Activated naive CD8-positive, alpha-beta T cell treated with anti-CD3 and anti-CD28 coated beads, Interleukin-2, amount 10 ng/mL, durations not matched to agents 7 days and 5 days (primary cell): ENCODE measurements at regions of chr3 and their contacts with region 1.

Region 1: GRCh38 chr3:13452490-13453335 is 27.4 kb upstream of the HDAC11 start:
- DNase-seq: peak; percentile 47
- ATAC-seq: no peak
- H3K4me3 Mint-ChIP-seq: peak overlapping the region; percentile 79
- H3K27ac Mint-ChIP-seq: peak overlapping the region; percentile 88
- H3K4me1 Mint-ChIP-seq: peaks cover 11% of the 10 kb centered on the region
- H3K27me3 Mint-ChIP-seq: peaks cover 2% of the 10 kb centered on the region

Region 2: GRCh38 chr3:13346481-13347389 is 106.0 kb before region 1 on chr3:
- POLR2A ChIA-PET with region 1: interaction called, 19 read pairs
- DNase-seq: peak; percentile 71
- ATAC-seq: peak; percentile 80
- H3K4me3 Mint-ChIP-seq: peak overlapping the region; percentile 38
- H3K27ac Mint-ChIP-seq: peak overlapping the region; percentile 83
- H3K4me1 Mint-ChIP-seq: peaks cover 60% of the 10 kb centered on the region
- H3K27me3 Mint-ChIP-seq: no peaks in the 10 kb centered on the region

Region 3: DNA sequence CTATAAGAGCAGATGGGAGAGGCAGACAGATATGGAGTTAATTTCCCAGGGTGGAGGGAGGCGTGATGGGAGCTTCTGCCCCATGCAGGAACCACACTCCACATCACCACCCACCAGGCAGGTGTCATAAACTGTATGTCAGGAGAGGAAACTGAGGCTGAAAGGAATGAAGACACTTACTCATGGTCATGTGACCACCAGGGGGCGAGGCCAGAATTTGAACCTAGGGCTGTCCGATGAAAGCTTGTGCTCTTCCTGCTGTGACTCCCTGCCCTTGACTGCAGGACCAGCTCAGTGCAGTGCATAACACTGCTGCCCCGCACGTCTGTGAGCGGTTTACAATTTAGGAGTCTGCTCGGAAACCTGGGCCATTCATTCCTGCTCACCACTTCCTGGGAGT is 61.4 kb before region 1 on chr3:
- POLR2A ChIA-PET with region 1: interaction called, 10 read pairs
- DNase-seq: no peak
- ATAC-seq: peak; percentile 14
- H3K4me3 Mint-ChIP-seq: no peak overlapping the region
- H3K27ac Mint-ChIP-seq: no peak overlapping the region
- H3K4me1 Mint-ChIP-seq: peaks cover 5% of the 10 kb centered on the region
- H3K27me3 Mint-ChIP-seq: no peaks in the 10 kb centered on the region

Region 4: DNA sequence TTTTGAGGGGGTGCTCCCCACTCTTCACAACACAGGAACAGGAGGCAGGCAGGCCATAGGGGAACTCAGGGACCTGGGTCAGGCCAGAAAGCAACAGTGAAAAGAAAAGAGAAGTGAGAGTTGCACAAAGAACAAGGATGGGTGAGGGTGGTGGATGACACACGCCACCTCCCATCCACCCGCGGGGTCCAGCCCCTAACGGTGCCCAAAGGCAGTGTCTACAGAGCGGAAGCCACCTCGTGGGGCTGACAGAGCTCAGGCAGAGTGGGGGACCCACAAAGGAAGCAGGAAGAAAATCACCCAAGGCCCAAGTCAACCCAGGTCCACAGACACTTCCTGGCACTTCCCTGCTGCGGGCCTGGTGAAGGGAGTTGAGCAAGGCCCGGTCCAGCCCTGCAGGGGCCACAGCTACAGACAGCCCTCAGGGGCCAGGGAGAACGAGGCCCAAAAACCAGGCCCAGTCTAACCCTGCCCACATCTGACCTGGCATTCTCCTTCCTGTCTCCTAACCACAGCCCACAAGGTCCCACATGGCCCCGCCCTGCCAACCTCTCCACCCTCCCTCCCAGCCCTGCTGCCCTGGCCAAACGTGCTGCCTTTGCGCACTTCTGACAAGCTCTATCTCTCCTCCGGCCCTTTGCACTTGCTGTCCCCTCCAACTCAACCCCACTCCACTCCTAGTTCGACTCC is 38.5 kb before region 1 on chr3:
- POLR2A ChIA-PET with region 1: interaction called, 59 read pairs
- DNase-seq: peak; percentile 77
- ATAC-seq: peak; percentile 93
- H3K4me3 Mint-ChIP-seq: peak overlapping the region; percentile 79
- H3K27ac Mint-ChIP-seq: peak overlapping the region; percentile 90
- H3K4me1 Mint-ChIP-seq: peaks cover 53% of the 10 kb centered on the region
- H3K27me3 Mint-ChIP-seq: no peaks in the 10 kb centered on the region

Region 5: DNA sequence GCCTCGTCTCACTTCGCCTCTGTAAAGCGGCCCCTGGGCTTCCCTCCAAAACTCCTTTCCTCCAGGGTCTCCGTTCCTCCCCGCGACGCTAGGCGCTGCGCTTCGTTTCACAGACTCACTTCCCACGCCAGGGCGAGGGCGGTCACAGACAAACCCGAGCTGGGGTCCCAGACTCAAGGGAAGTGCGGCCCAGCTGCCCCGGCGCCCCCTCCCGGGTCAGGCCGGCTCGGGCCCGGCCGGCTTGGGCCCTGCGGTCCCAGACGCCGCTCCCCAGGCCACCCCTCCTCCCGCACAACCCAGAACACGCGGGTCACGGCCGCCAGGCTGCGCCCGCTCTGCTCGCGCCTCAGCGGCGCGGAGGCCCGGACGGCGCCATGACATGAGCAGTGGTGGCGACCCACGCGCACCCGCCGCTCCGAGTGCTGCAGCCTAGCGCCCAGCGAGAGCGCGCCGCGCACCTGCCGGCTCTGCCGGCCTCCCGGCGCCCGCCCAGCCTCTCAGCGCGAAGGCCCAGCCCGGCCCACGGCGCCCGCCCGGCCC is 33.1 kb before region 1 on chr3:
- POLR2A ChIA-PET with region 1: interaction called, 59 read pairs
- DNase-seq: peak; percentile 76
- ATAC-seq: peak; percentile 47
- H3K4me3 Mint-ChIP-seq: peak overlapping the region; percentile 90
- H3K27ac Mint-ChIP-seq: peak overlapping the region; percentile 84
- H3K4me1 Mint-ChIP-seq: peaks cover 53% of the 10 kb centered on the region
- H3K27me3 Mint-ChIP-seq: no peaks in the 10 kb centered on the region